CD14-positive monocyte (primary cell): ENCODE measurements at regions of chr16 and their contacts with region 1.

Region 1: GRCh38 chr16:3256146-3256865 is at the start of gene MEFV:
- DNase-seq: peak; percentile 76 to 93 (median 92)
- H3K4me3 ChIP-seq: peak within 1 kb of the TSS; percentile 85 to 98 (median 92)
- H3K4me3 Mint-ChIP-seq: peak within 1 kb of the TSS; percentile 97 to 99
- H3K27ac ChIP-seq: peak within 1 kb of the TSS; percentile 90 to 98
- H3K27ac Mint-ChIP-seq: peak within 1 kb of the TSS; percentile 93 to 99 (median 98)
- H3K4me1 ChIP-seq: peaks cover 87 to 96% of the 10 kb centered on the region in 2 donors
- H3K4me1 Mint-ChIP-seq: peaks cover 95% of the 10 kb centered on the region
- H3K27me3 ChIP-seq: no peaks in the 10 kb centered on the region
- H3K27me3 Mint-ChIP-seq: peaks cover 0 to 2% (median 0%) of the 10 kb centered on the region in 3 donors
- CTCF ChIP-seq: no peak
- polyA plus RNA-seq, gene MEFV: 37.7 to 78.0 (median 73.2) TPM

Region 2: DNA sequence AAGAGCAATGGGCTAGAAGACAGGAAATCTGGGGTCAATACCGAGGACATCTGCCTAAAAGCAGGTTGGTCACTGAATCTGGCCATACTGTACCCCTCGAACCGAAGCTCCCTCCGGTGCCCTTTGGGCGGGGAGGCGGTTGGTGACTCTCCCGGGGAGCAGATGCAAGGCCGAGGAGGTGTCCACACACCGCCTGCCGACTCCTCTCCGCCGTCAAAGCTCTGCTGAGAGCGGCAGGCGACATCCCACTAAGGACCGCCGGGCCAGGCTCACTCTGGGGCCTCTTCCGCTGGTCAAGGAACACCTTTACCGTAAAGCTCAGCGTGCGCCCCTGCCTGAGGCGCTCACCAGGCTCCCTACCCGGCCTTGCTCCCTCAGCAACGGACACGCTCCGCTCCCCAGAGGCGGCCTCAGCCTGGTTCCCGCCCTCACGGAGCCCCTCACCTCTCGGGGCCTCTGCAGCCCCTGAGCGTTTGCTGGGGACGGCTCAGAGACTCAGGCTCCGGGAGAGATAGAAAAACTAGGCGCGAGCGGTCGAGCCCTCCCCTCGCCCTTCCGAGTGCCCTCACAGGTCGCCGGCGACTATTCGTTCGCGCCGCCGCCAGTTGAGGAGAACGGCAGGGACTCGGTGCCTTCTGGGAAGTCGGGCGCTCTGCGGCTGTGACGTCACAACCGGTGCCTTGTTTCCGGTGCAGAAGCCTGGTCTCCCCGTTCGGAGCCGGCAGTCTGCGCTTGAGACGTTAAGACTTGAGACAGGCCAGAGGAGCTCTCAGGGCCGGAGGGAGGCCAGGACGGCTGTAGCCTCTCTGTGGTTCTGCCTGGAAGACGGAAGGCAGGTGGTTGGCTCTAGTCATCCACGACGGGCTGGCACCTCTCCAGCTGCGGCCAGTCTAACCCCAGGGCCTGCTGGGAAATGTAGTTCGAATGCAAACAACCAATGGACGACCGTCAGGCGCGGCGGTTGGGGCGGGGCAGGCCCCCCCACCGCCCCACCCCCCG is 21.5 kb before region 1 on chr16 and contains the start of gene ZNF200:
- intact Hi-C with region 1: loop called in 1 of 2 experiments (anchors 2 kb)
- DNase-seq: peak; percentile 88 to 91 (median 91)
- H3K4me3 ChIP-seq: peak within 1 kb of the TSS; percentile 73 to 97 (median 75)
- H3K4me3 Mint-ChIP-seq: peak within 1 kb of the TSS; percentile 91 to 96
- H3K27ac ChIP-seq: peak within 1 kb of the TSS; percentile 86 to 97
- H3K27ac Mint-ChIP-seq: peak within 1 kb of the TSS; percentile 97 to 99 (median 99)
- H3K4me1 ChIP-seq: peaks cover 12 to 13% of the 10 kb centered on the region in 2 donors
- H3K4me1 Mint-ChIP-seq: peaks cover 18% of the 10 kb centered on the region
- H3K27me3 ChIP-seq: no peaks in the 10 kb centered on the region
- H3K27me3 Mint-ChIP-seq: peaks cover 0 to 2% (median 1%) of the 10 kb centered on the region in 3 donors
- CTCF ChIP-seq: no peak
- polyA plus RNA-seq, gene ZNF200: 2.0 to 2.8 (median 2.5) TPM